Aorta (tissue), 5 donors: ENCODE measurements at regions of chr9 and their contacts with region 1.

Region 1: DNA sequence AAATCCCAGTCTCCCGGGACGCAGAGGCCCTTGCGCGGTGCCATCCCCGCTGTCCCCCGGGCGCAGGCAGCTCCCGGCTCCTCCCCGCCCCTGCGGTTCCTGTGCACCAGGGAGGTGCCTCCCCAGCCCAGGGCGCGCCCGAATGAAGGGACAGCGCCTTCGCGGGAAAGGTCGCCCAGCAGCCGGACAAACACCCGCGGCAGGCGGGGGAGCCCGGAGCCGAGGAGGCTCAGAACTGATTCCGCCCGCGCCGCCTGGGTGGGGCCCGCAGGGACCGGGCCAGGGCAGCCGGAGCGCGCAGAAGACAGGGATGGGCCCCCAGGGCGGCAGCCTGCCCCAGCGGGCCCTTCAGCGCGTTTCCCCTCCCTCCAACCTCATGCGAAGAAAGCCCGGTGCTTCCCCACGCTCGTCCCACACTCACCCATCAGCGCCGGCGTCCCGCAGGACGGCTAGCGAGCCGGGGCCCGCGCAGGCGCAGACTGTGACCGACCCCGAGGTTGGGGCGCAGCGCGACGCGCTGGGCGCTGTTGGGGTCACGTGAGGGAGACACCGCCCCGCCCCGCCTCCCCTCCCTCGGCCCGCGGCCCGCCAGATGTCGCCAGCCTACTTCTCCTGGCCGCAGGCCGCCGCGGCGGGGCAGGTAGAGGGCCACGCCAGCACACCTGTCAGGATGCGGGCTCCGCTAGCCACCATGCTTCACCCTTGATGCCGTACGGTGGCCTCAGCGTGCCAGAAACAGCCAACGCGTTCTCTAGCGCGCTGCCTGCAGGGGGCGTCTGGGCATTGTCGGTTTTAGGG is at the start of gene SLC25A51:
- DNase-seq: peak; percentile 95 to 99
- ATAC-seq: peak; percentile 97
- H3K4me3 ChIP-seq: peak within 1 kb of the TSS; percentile 51 to 81
- H3K27ac ChIP-seq: peak within 1 kb of the TSS in 1 of 2 donors; percentile 26
- H3K4me1 ChIP-seq: peaks cover 0 to 3% of the 10 kb centered on the region in 2 donors
- H3K27me3 ChIP-seq: no peaks in the 10 kb centered on the region
- total RNA-seq, gene SLC25A51: 23.4 to 24.3 TPM

Region 2: DNA sequence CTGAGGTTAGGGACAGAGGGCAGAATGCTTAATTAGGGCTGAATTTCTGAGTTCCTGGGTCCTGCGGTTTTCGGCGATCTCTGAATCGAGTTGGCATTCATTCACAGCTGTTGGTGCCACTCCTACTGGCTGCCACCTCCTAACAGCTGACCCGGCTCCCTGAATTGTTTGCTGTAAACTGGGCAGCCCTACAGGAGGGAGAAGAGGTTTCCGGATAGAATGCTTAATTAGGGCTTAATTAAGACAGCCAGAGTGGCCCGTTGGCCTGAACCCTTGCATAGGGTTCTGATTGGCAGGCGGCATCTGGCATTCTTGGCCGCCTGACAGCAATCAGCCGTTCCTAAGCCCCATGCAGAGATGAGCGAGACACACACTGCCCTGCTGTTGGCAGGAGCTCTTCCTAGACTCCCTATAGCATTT is 227.4 kb before region 1 on chr9:
- intact Hi-C with region 1: no loop called
- DNase-seq: no peak
- ATAC-seq: no peak
- H3K4me3 ChIP-seq: no peak overlapping the region
- H3K27ac ChIP-seq: no peak overlapping the region
- H3K4me1 ChIP-seq: no peaks in the 10 kb centered on the region
- H3K27me3 ChIP-seq: no peaks in the 10 kb centered on the region

Region 3: GRCh38 chr9:37776328-37776727 is 127.5 kb before region 1 on chr9:
- intact Hi-C with region 1: no loop called
- DNase-seq: no peak
- ATAC-seq: no peak
- H3K4me3 ChIP-seq: no peak overlapping the region
- H3K27ac ChIP-seq: no peak overlapping the region
- H3K4me1 ChIP-seq: no peaks in the 10 kb centered on the region
- H3K27me3 ChIP-seq: no peaks in the 10 kb centered on the region

Region 4: GRCh38 chr9:38017149-38017884 is 113.5 kb after region 1 on chr9:
- intact Hi-C with region 1: loop called in 1 of 2 experiments (anchors 5 kb)
- DNase-seq: peak; percentile 70 to 85
- ATAC-seq: peak; percentile 68
- H3K4me3 ChIP-seq: no peak overlapping the region
- H3K27ac ChIP-seq: peak overlapping the region in 1 of 2 donors; percentile 20
- H3K4me1 ChIP-seq: peaks cover 2 to 11% of the 10 kb centered on the region in 2 donors
- H3K27me3 ChIP-seq: no peaks in the 10 kb centered on the region

Region 5: GRCh38 chr9:38392235-38393127 is 488.6 kb after region 1 on chr9 and contains the start of gene ALDH1B1:
- intact Hi-C with region 1: loop called in 1 of 2 experiments (anchors 10 kb)
- DNase-seq: peak; percentile 93 to 97
- ATAC-seq: peak; percentile 93
- H3K4me3 ChIP-seq: peak within 1 kb of the TSS; percentile 56 to 67
- H3K27ac ChIP-seq: peak within 1 kb of the TSS; percentile 95 to 97
- H3K4me1 ChIP-seq: no peaks in the 10 kb centered on the region
- H3K27me3 ChIP-seq: no peaks in the 10 kb centered on the region
- total RNA-seq, gene ALDH1B1: 141 to 336 TPM

Region 6: GRCh38 chr9:38423973-38424843 is 520.4 kb after region 1 on chr9 and contains the start of gene IGFBPL1:
- intact Hi-C with region 1: loop called (anchors 2 to 10 kb)
- DNase-seq: no peak
- ATAC-seq: peak; percentile 60
- H3K4me3 ChIP-seq: peak within 1 kb of the TSS; percentile 72 to 75
- H3K27ac ChIP-seq: peak within 1 kb of the TSS in 1 of 2 donors; percentile 52
- H3K4me1 ChIP-seq: peaks cover 0 to 4% of the 10 kb centered on the region in 2 donors
- H3K27me3 ChIP-seq: no peaks in the 10 kb centered on the region
- total RNA-seq, gene IGFBPL1: 5.9 to 27.8 TPM